AG04449 (cell line): ENCODE measurements at regions of chr12 and their contacts with region 1.

Region 1: GRCh38 chr12:20483776-20484175 is 115.4 kb downstream of the PDE3A start:
- DNase-seq: no peak
- H3K4me3 ChIP-seq: no peak overlapping the region
- CTCF ChIP-seq: no peak

Region 2: GRCh38 chr12:20472102-20472782 is 11.5 kb before region 1 on chr12:
- CTCF ChIA-PET with region 1: interaction called, 12 read pairs
- POLR2A ChIA-PET with region 1: no interaction called
- DNase-seq: no peak
- H3K4me3 ChIP-seq: no peak overlapping the region
- CTCF ChIP-seq: no peak

Region 3: GRCh38 chr12:20507711-20508110 is 23.9 kb after region 1 on chr12:
- CTCF ChIA-PET with region 1: no interaction called
- POLR2A ChIA-PET with region 1: no interaction called
- DNase-seq: no peak
- H3K4me3 ChIP-seq: no peak overlapping the region
- CTCF ChIP-seq: no peak

Region 4: DNA sequence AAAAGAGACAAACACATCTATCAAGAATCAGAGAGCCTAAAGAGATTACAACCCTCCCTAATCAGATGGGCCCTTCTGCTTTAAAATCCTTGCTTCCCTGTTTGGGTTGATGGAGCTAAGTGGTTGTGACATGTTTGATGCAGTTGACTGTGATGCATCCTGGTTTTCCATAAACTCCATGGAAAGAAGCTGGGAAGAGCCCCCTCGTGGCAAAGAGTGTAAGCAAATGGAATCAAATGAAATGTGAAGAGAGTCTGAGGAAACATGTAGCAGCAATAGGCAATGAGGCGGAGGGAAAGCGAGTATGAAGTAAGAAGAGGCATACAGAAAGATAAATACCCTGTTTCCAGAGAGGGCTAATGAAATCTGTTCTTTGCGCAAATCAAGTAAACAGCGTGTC is 140.9 kb after region 1 on chr12:
- CTCF ChIA-PET with region 1: no interaction called
- POLR2A ChIA-PET with region 1: no interaction called
- DNase-seq: no peak
- H3K4me3 ChIP-seq: no peak overlapping the region
- CTCF ChIP-seq: peak; percentile 33